ENCODE measurements at regions of chr7 and their contacts with region 1.

Region 1: DNA sequence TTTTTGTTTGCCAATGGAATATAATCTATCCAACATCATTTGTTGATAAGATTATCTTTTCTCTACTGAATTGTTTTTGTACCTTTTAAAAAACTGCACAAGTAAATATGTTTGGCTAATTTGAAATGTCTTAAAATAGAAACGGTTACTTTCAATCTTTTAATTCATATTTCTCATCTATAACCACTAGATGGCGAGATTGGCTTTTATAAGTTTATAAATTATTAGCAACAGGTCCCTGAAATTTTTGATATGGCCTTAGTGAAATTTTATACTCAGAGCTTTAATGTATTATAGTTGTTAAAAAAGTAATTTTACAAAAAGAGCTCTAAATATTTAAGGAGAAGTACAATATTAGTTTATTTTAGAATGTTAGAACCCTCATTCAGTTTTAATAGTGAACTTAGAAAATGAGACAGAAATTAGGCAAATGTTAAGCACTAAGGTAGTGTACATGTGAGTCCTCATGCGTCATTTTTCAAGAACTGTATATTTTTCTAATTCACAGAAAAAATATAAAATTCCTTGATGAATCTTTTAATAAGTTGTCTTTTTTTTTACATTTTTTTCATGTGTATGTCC is 592.5 kb downstream of the ARL4A start:
- DNase-seq: peak; percentile 67
- H3K4me3 ChIP-seq: no peak overlapping the region
- H3K27ac ChIP-seq: no peak overlapping the region
- H3K4me1 ChIP-seq: no peaks in the 10 kb centered on the region
- H3K27me3 ChIP-seq: no peaks in the 10 kb centered on the region

Region 2: DNA sequence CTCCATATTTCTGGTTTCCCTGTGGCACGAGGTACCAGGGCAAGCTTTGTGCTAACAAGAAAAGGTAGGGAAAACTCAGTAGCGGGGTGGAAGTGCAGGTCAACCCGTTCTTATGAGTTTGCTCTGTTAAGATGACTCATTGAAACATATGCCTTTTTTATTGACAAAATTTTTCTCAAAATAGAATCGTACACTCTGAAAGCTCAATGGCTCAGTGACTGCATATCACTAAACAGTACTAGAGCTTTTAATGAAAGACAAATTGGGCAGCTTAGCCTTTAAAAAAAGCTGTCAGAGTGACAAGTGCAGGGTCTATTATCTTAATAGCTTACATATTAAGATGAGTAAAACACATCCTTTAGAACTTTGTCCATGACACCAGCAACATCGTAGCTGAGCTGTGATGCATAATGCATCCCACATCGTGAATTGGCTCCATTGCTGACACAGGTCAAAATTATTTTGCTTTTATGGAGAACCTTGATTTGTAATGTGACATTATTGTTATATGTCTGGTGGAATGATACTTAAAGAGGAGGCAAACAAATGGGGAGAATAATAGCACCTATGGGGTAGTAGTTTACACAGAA is 445.1 kb after region 1 on chr7:
- in situ Hi-C with region 1: loop called (anchors 25 kb)
- DNase-seq: no peak
- H3K4me3 ChIP-seq: no peak overlapping the region
- H3K27ac ChIP-seq: no peak overlapping the region
- H3K4me1 ChIP-seq: no peaks in the 10 kb centered on the region
- H3K27me3 ChIP-seq: no peaks in the 10 kb centered on the region

Region 3: GRCh38 chr7:14673202-14673601 is 1393.3 kb after region 1 on chr7:
- in situ Hi-C with region 1: loop called (anchors 10 kb)
- DNase-seq: no peak
- H3K4me3 ChIP-seq: no peak overlapping the region
- H3K27ac ChIP-seq: no peak overlapping the region
- H3K4me1 ChIP-seq: no peaks in the 10 kb centered on the region
- H3K27me3 ChIP-seq: no peaks in the 10 kb centered on the region; the same call in 1 of the 2 replicates